ENCODE measurements at regions of chr18 and their contacts with region 1.

Region 1: DNA sequence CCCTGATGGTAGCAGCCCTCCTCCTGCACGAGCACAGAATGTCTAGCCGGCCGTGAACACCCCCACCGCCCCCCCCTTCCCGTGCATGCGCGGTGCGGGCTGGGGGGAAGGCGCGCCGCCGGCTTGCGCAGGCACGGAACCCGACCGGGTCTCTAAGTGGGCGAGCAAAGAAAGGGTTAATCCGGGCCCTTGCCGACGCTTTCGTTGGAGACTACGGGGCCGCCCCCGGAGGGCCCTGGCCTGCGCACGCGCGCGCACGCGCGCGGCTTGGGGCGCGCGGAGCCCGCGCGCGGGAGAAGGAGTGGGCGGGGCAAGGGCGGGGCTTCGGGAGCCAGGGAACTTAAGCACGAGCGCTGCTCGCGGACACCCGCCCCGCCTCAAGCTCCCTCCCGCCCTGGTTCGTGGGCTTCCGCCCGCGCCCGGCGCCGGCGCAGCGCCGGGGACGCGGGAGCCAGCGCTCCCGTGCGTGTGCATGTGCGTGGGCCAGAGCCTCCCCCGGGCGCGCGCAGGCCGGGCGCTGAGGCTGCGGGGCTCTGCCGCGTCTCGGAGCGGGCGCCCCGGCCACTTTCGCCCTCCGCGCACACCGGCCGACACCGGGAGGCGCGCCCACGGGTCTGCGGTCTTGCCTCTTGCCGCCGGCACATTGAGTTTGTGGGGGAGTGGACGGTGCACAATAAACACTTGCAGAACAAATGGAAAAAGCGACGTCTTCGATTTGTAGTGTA is 617 bp upstream of the ZBTB14 start:
- DNase-seq: peak; percentile 95
- H3K4me3 ChIP-seq: peak overlapping the region; percentile 80 to 90
- H3K27ac ChIP-seq: peak overlapping the region; percentile 91 to 96
- H3K4me1 ChIP-seq: no peaks in the 10 kb centered on the region
- H3K27me3 ChIP-seq: no peaks in the 10 kb centered on the region
- CTCF ChIP-seq: no peak
- POLR2A ChIP-seq: no peak

Region 2: GRCh38 chr18:5237723-5238370 is 58.3 kb before region 1 on chr18:
- intact Hi-C with region 1: loop called (anchors 2 kb)
- DNase-seq: peak; percentile 84
- H3K4me3 ChIP-seq: peak overlapping the region; percentile 73 to 74
- H3K27ac ChIP-seq: peak overlapping the region; percentile 98 to 99
- H3K4me1 ChIP-seq: peaks cover 5% of the 10 kb centered on the region
- H3K27me3 ChIP-seq: no peaks in the 10 kb centered on the region
- CTCF ChIP-seq: peak in 3 of 4 experiments; percentile 14 to 50 (median 48)
- POLR2A ChIP-seq: no peak

Region 3: GRCh38 chr18:5444847-5445246 is 148.7 kb after region 1 on chr18:
- intact Hi-C with region 1: no loop called
- DNase-seq: no peak
- H3K4me3 ChIP-seq: no peak overlapping the region
- H3K27ac ChIP-seq: no peak overlapping the region
- H3K4me1 ChIP-seq: no peaks in the 10 kb centered on the region
- H3K27me3 ChIP-seq: no peaks in the 10 kb centered on the region
- CTCF ChIP-seq: no peak
- POLR2A ChIP-seq: no peak

Region 4: GRCh38 chr18:5475267-5475666 is 179.1 kb after region 1 on chr18:
- intact Hi-C with region 1: no loop called
- DNase-seq: no peak
- H3K4me3 ChIP-seq: no peak overlapping the region
- H3K27ac ChIP-seq: no peak overlapping the region
- H3K4me1 ChIP-seq: no peaks in the 10 kb centered on the region
- H3K27me3 ChIP-seq: no peaks in the 10 kb centered on the region
- CTCF ChIP-seq: no peak
- POLR2A ChIP-seq: no peak

Region 5: GRCh38 chr18:6414118-6414722 is 1118.1 kb after region 1 on chr18:
- intact Hi-C with region 1: loop called (anchors 10 kb)
- DNase-seq: peak; percentile 68
- H3K4me3 ChIP-seq: peak overlapping the region; percentile 78 to 89
- H3K27ac ChIP-seq: peak overlapping the region; percentile 81 to 84
- H3K4me1 ChIP-seq: no peaks in the 10 kb centered on the region
- H3K27me3 ChIP-seq: no peaks in the 10 kb centered on the region
- CTCF ChIP-seq: peak in 2 of 4 experiments; percentile 13 to 22
- POLR2A ChIP-seq: no peak